Left cardiac atrium (tissue), 4 donors: ENCODE measurements at regions of chr4 and their contacts with region 1.

Region 1: DNA sequence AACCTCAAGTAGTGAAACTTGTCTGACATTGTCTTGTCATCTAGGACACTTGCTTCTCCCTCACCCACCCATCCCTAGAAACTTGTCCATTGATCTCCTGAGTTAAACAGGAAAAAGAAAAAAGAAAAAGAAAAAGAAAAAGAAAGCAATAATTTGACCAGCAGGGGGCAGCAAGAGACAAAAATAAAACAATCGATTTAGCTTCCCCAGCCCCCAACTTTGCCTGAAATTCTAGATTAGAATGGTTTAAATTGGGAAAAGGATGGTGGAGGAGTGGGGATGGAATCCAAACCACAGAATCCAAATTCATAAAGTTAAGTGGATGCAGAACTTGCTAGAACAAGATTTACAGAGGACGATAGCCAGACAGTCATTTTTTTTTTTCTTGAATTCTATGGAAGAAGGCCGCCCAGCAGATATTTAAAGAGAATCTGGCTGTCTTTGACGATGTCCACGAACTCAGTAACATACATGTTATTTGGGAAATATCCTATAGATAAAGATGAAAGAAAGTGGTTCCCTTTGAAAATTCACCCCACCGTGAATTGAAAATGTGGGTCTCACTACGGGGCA is 282.9 kb downstream of the USP46 start:
- DNase-seq: peak; percentile 26
- ATAC-seq: no peak

Region 2: DNA sequence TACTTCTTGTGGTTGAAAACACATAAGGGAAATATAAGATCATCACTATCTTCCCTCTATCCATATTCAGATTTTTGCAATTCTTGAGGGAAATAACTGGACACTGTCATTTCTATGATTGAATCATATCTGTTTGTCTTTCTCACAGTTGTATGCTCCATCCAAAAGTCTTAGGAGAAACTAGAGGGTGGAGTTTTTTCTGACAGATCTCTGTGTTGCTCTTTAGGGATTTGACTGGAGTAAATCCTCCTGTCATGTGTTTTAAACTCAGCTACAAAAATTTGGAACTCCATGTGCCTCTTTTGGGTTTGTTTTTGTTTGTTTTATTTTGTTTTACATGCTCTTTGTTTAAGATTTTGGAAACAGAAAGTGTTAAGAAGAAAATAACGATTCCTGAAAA is 188.6 kb before region 1 on chr4:
- intact Hi-C with region 1: no loop called
- DNase-seq: no peak
- ATAC-seq: no peak

Region 3: GRCh38 chr4:52312714-52313113 is 63.5 kb before region 1 on chr4:
- intact Hi-C with region 1: no loop called
- DNase-seq: no peak
- ATAC-seq: no peak

Region 4: DNA sequence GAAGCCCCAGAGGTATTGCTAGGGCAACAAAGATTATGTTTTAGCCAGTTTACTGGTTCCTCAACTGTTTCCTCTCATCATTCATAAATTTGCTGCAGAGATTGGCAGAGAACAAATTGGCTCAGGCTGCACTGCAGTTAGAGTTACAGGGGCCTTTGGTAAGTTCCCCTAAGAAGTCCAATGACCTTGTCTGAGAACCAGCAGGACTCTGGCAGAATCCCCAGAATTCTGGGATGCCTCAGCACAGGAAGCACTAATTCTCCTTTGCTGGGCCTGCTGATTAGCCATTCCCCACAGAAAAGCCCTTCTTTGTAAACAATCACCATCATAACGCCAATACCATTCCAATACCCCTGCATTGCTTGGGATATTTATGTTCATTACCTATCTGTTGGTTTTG is 131.6 kb after region 1 on chr4:
- intact Hi-C with region 1: loop called in 1 of 2 experiments (anchors 10 kb)
- DNase-seq: peak; percentile 22
- ATAC-seq: peak; percentile 78 to 89

Region 5: GRCh38 chr4:52529983-52530382 is 153.8 kb after region 1 on chr4:
- intact Hi-C with region 1: loop called in 1 of 2 experiments (anchors 10 kb)
- DNase-seq: no peak
- ATAC-seq: no peak